Panc1 (cell line): ENCODE measurements at regions of chr5 and their contacts with region 1.

Region 1: DNA sequence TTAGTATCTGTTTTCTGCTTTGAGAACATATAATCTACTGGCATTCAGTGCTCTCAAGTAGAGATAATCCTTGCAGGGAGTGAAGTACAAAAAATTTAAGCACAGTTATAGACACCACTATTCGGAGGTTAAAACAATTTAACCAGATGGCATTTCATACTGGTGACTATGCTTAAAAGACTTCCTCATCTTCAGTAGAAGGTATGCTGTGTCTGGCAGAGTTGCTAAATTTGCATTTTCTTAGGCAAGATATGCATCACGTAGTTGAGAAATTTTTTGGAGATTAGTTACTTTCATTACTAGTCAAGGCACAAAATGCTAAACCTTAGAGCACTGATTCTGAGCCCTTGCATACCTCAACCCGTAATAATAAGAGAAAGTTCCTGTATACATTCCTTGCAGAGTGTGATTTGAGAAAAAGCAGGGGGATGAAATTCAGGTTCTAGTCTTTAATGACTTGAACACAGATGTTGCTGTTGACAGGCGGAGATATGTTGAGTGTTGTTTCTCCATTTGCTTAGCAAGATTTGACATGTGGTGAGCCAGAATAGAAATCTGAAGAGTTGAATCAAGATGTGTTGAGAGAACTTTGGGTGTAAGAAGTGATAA is 70.8 kb upstream of the STARD4 start:
- DNase-seq: no peak
- ATAC-seq: no peak
- H3K4me3 ChIP-seq: no peak overlapping the region
- H3K27ac ChIP-seq: no peak overlapping the region
- H3K4me1 ChIP-seq: no peaks in the 10 kb centered on the region
- H3K27me3 ChIP-seq: no peaks in the 10 kb centered on the region
- CTCF ChIP-seq: no peak

Region 2: DNA sequence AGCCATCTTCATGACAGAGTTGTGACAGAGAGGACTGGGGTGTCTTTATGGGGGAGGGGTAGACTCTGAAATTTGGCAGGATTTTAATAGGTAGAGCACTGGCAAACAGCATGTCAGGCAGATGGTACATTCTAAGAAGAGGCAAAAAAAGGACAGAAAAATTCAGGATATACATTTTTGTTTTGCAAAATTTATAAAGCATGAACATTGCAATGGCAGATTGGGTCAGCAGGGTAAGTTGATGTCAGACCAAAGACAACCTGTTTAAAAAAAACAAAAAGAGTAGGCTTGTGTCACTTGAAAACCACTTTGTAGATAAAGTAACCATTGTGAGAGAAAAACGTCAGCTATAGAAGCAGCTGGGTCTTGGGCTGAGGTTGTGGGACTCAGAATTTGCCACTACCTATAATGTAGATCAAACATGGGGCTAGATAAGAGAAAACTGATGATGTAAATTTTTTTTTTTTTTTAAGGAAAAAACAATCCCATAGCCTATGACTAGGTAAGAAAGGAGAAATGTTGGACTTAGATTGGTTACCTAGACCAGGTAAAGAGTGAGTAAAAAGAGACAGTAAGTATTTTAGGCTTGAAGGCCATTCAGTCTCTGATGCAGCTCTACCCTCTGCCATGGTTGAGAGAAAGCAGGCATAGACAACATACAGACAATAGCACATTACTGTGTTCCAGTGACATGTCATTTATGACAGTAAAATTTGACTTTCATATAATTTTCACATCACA is 350.6 kb before region 1 on chr5:
- CTCF ChIA-PET with region 1: interaction called, 12 read pairs
- POLR2A ChIA-PET with region 1: no interaction called
- in situ Hi-C with region 1: no loop called
- intact Hi-C with region 1: no loop called
- DNase-seq: no peak
- ATAC-seq: no peak
- H3K4me3 ChIP-seq: no peak overlapping the region
- H3K27ac ChIP-seq: no peak overlapping the region
- H3K4me1 ChIP-seq: no peaks in the 10 kb centered on the region
- H3K27me3 ChIP-seq: peaks cover 10% of the 10 kb centered on the region
- CTCF ChIP-seq: no peak

Region 3: GRCh38 chr5:111757355-111758283 is 174.5 kb after region 1 on chr5:
- CTCF ChIA-PET with region 1: no interaction called
- POLR2A ChIA-PET with region 1: no interaction called
- in situ Hi-C with region 1: no loop called
- intact Hi-C with region 1: no loop called
- DNase-seq: peak; percentile 60
- ATAC-seq: peak; percentile 94
- H3K4me3 ChIP-seq: peak overlapping the region; percentile 60 to 79
- H3K27ac ChIP-seq: peak overlapping the region; percentile 75; the same call in 1 of the 2 replicates
- H3K4me1 ChIP-seq: peaks cover 6% of the 10 kb centered on the region; the same call in 1 of the 2 replicates
- H3K27me3 ChIP-seq: no peaks in the 10 kb centered on the region; the same call in none of the 2 replicates
- CTCF ChIP-seq: peak; percentile 15; the same call in 1 of the 2 replicates